Activated naive CD4-positive, alpha-beta T cell treated with anti-CD3 and anti-CD28 coated beads for 36 hours (primary cell): ENCODE measurements at regions of chr12 and their contacts with region 1.

Region 1: GRCh38 chr12:103503977-103504376 is 8.2 kb upstream of the C12orf42 start:
- DNase-seq: peak; percentile 69
- H3K4me3 Mint-ChIP-seq: no peak overlapping the region
- H3K27ac Mint-ChIP-seq: no peak overlapping the region
- H3K4me1 Mint-ChIP-seq: peaks cover 22% of the 10 kb centered on the region
- H3K27me3 Mint-ChIP-seq: peaks cover 3% of the 10 kb centered on the region

Region 2: DNA sequence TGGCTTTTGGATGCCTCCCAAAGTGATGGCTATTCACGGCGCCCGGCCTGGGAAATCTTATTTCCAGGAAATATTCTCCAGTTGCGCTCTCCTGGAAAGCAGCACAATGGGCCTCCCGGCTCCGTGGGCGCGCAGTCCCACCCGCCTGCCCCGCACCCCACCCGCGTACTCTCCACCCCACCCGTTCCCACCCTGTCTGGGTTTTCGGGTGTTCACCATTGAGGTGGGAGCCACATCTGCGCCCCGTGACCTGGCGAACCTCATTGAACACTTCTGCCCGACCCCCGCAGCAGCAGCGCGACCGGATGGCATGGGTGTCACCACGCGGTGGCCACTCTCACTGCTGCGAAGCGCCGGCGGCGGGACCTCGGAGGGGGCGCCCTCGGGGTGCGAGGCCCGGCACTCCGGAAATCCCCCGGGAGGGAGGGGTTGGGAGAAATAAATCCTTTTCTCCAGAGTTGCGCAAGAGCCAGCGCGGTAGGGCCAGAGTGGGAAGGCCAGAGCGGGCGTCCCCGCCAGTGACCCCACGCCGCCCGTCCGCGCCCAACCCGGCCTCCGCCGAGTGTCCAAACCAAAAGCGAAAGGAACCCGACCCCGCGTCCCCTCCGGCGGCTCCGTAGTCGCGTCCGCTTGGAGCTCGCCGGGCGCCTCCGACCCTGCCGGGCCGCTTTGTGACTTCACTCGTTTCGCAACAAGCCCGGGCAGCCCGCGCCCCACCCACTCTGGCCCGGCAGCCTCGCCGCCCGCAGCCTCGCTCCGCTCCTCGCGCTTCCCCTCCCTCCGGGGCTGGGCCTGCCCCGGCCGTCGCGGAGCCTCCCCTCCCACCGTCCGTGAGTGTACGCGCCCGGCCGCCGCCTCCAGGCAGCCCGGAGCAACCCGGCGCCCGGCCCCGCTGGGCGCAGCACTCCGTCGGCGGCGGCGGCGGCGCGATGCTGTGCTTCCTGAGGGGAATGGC is 1626.8 kb before region 1 on chr12 and contains the start of gene DRAM1:
- CTCF ChIA-PET with region 1: no interaction called
- intact Hi-C with region 1: loop called (anchors 10 kb)
- DNase-seq: peak; percentile 83
- H3K4me3 Mint-ChIP-seq: peak within 1 kb of the TSS; percentile 91
- H3K27ac Mint-ChIP-seq: peak within 1 kb of the TSS; percentile 64
- H3K4me1 Mint-ChIP-seq: peaks cover 12% of the 10 kb centered on the region
- H3K27me3 Mint-ChIP-seq: peaks cover 3% of the 10 kb centered on the region
- total RNA-seq, gene DRAM1: 4.1 to 4.9 TPM

Region 3: GRCh38 chr12:102948941-102949352 is 555.0 kb before region 1 on chr12:
- CTCF ChIA-PET with region 1: no interaction called
- intact Hi-C with region 1: loop called (anchors 1 kb)
- DNase-seq: peak; percentile 65
- H3K4me3 Mint-ChIP-seq: no peak overlapping the region
- H3K27ac Mint-ChIP-seq: no peak overlapping the region
- H3K4me1 Mint-ChIP-seq: peaks cover 13% of the 10 kb centered on the region
- H3K27me3 Mint-ChIP-seq: peaks cover 66% of the 10 kb centered on the region

Region 4: GRCh38 chr12:103279444-103279843 is 224.5 kb before region 1 on chr12:
- CTCF ChIA-PET with region 1: no interaction called
- intact Hi-C with region 1: loop called (anchors 1 kb)
- DNase-seq: no peak
- H3K4me3 Mint-ChIP-seq: no peak overlapping the region
- H3K27ac Mint-ChIP-seq: no peak overlapping the region
- H3K4me1 Mint-ChIP-seq: peaks cover 3% of the 10 kb centered on the region
- H3K27me3 Mint-ChIP-seq: peaks cover 2% of the 10 kb centered on the region

Region 5: DNA sequence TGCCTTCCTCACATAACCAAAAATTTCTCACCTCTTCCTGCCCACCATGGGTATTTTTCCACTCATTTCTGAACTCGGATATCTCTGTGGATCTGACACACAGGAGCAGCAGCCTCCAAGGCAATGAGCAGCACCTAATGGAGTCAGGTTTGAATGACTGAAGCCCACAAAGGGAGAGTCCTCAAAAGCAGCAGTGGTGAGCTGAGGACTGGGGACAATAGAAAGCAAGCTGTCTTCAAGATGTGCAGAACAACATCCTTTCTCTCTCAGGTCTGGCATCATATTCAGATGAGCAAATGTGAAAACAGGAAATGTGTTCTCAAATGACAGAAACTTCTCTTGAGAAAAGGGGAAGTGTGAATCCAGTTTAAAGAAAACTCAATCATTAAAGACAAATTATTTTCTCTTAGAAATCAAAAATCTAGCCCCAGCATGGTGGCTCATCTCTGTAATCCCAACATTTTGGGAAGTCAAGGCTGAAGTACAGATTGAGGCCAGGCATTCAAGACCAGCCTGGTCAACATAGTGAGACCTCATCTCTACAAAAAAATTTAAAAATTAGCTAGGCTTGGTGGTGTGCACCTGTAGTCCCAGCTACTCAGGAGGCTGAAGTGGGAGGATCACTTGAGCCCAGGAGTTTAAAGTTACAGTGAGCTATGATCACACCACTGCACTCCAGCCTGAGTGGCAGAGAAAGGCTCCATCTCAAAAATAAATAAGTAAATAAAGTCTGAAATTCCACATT is 62.4 kb before region 1 on chr12:
- CTCF ChIA-PET with region 1: no interaction called
- intact Hi-C with region 1: loop called (anchors 1 kb)
- DNase-seq: peak; percentile 51
- H3K4me3 Mint-ChIP-seq: peak overlapping the region; percentile 46
- H3K27ac Mint-ChIP-seq: peak overlapping the region; percentile 77
- H3K4me1 Mint-ChIP-seq: peaks cover 17% of the 10 kb centered on the region
- H3K27me3 Mint-ChIP-seq: no peaks in the 10 kb centered on the region